Activated B cell treated with CpG ODN at 0.5 μM for 24 hours (primary cell): ENCODE measurements at regions of chr12 and their contacts with region 1.

Region 1: DNA sequence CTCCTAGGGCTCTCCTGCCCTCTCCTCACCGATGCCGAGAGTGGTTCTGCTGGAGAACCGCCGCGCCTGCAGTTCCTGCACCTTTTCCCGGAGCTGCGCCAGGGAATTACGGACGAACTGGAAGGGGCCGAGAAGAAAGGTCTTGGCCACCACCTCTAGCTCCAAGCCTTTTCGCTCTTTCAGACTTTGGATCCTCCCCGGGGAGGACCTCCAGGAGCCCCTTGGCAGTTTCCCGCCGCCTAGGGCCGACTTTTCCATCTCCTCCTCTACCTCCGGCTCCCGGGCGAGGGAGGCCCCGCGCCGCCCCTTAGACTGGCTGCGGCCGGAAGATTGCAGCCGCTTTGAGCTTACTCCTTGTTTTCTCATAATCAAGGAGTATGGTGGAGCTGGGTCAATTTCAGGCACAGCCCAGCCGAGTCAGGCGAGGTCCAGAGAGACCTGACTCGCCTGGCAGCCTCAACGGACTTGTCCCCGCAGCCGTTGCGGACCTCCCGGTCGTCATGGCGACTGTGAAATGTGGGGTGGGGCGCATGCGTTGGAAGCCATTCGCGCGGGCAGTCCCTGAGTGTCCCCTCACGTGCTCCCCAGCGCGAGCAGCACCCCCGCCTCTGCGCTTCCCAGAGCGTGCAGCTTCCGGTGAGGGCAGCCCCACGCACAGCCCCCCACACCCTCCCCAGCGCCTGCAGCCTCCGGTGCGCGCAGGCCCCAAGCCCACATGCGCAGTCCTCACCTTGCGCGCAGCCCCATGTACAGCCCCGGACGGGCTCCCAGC is at the start of gene DPY19L2:
- DNase-seq: no peak
- ATAC-seq: peak; percentile 37
- H3K4me3 Mint-ChIP-seq: peak within 1 kb of the TSS; percentile 76
- H3K27ac Mint-ChIP-seq: no peak within 1 kb of the TSS
- H3K4me1 Mint-ChIP-seq: peaks cover 19% of the 10 kb centered on the region
- H3K27me3 Mint-ChIP-seq: peaks cover 17% of the 10 kb centered on the region
- CTCF ChIP-seq: no peak
- total RNA-seq, gene DPY19L2: 0.69 and 0.73 TPM in 2 replicates

Region 2: DNA sequence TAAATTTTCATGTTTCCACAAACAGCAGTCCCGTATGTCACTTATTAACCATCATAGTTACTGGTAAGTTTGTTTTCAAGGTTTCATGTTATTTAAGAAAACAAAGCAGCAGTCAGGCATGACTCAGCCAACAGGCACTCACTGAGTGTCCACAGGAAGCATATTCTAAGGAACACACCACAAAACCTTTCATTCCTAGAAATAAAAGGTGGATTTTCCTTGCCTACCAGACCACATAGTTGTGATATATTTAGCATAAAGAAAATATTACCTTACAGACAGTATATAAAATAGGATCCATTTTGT is 373.9 kb before region 1 on chr12:
- CTCF ChIA-PET with region 1: no interaction called
- POLR2A ChIA-PET with region 1: no interaction called
- intact Hi-C with region 1: no loop called
- DNase-seq: no peak
- ATAC-seq: no peak
- H3K4me3 Mint-ChIP-seq: no peak overlapping the region
- H3K27ac Mint-ChIP-seq: no peak overlapping the region
- H3K4me1 Mint-ChIP-seq: no peaks in the 10 kb centered on the region
- H3K27me3 Mint-ChIP-seq: no peaks in the 10 kb centered on the region
- CTCF ChIP-seq: no peak

Region 3: GRCh38 chr12:63420206-63420644 is 248.0 kb before region 1 on chr12:
- CTCF ChIA-PET with region 1: no interaction called
- POLR2A ChIA-PET with region 1: no interaction called
- intact Hi-C with region 1: no loop called
- DNase-seq: no peak
- ATAC-seq: no peak
- H3K4me3 Mint-ChIP-seq: no peak overlapping the region
- H3K27ac Mint-ChIP-seq: no peak overlapping the region
- H3K4me1 Mint-ChIP-seq: no peaks in the 10 kb centered on the region
- H3K27me3 Mint-ChIP-seq: no peaks in the 10 kb centered on the region
- CTCF ChIP-seq: no peak

Region 4: DNA sequence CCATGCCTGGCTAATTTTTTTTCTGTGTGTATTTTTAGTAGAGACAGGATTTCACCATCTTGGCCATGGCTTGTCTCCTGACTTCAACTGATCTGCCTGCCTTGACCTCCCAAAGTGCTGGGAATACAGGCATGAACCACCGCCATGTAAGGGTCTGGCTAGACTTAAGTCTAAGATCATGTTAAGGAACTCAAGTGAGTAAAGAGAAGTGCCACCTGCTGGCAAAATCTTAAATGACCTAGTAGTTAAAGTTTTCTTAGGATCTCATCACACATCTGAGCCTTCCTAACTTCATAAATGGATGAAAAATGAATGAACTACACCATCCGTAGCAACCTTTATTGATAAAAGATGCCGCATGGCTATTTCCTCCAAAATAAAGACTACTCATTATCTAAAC is 724.0 kb after region 1 on chr12:
- CTCF ChIA-PET with region 1: no interaction called
- POLR2A ChIA-PET with region 1: no interaction called
- intact Hi-C with region 1: loop called (anchors 5 kb)
- DNase-seq: no peak
- ATAC-seq: no peak
- H3K4me3 Mint-ChIP-seq: no peak overlapping the region
- H3K27ac Mint-ChIP-seq: no peak overlapping the region
- H3K4me1 Mint-ChIP-seq: peaks cover 7% of the 10 kb centered on the region
- H3K27me3 Mint-ChIP-seq: peaks cover 34% of the 10 kb centered on the region
- CTCF ChIP-seq: no peak